ENCODE measurements at regions of chr1 and their contacts with region 1.

Region 1: DNA sequence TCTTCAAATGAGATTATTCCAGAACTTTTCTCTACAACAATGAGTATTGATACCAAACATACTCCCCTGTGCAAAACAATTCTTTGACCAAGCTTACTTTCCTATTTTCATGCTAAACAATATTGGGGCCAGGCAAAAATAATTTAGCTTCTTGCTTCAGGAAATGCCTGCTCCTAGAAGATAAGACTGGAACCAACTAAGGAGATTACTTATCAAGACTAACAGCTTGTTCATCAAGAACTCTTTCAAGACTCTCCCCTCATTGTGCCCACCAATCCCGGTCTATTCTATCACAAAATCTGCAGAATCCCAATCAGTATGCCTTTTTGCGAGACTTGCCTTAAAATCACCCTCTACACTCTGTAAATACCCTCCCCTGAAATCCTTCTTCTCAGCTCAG is 536.6 kb downstream of the RWDD3 start:
- DNase-seq: no peak
- ATAC-seq: no peak
- H3K4me3 ChIP-seq: no peak overlapping the region
- H3K4me3 Mint-ChIP-seq: no peak overlapping the region
- H3K27ac ChIP-seq: no peak overlapping the region
- H3K27ac Mint-ChIP-seq: no peak overlapping the region
- H3K4me1 ChIP-seq: no peaks in the 10 kb centered on the region
- H3K4me1 Mint-ChIP-seq: no peaks in the 10 kb centered on the region
- H3K27me3 ChIP-seq: no peaks in the 10 kb centered on the region
- H3K27me3 Mint-ChIP-seq: no peaks in the 10 kb centered on the region
- CTCF ChIP-seq: no peak

Region 2: GRCh38 chr1:95257758-95258157 is 512.8 kb before region 1 on chr1:
- CTCF ChIA-PET with region 1: no interaction called
- POLR2A ChIA-PET with region 1: no interaction called
- intact Hi-C with region 1: no loop called
- DNase-seq: no peak
- ATAC-seq: no peak
- H3K4me3 ChIP-seq: no peak overlapping the region
- H3K4me3 Mint-ChIP-seq: no peak overlapping the region
- H3K27ac ChIP-seq: no peak overlapping the region
- H3K27ac Mint-ChIP-seq: no peak overlapping the region
- H3K4me1 ChIP-seq: no peaks in the 10 kb centered on the region
- H3K4me1 Mint-ChIP-seq: no peaks in the 10 kb centered on the region
- H3K27me3 ChIP-seq: no peaks in the 10 kb centered on the region
- H3K27me3 Mint-ChIP-seq: no peaks in the 10 kb centered on the region
- CTCF ChIP-seq: no peak

Region 3: GRCh38 chr1:95793893-95794292 is 23.3 kb after region 1 on chr1:
- CTCF ChIA-PET with region 1: no interaction called
- POLR2A ChIA-PET with region 1: no interaction called
- intact Hi-C with region 1: loop called in 1 of 2 experiments (anchors 1 kb)
- DNase-seq: no peak
- ATAC-seq: no peak
- H3K4me3 ChIP-seq: no peak overlapping the region
- H3K4me3 Mint-ChIP-seq: no peak overlapping the region
- H3K27ac ChIP-seq: no peak overlapping the region
- H3K27ac Mint-ChIP-seq: no peak overlapping the region
- H3K4me1 ChIP-seq: no peaks in the 10 kb centered on the region
- H3K4me1 Mint-ChIP-seq: no peaks in the 10 kb centered on the region
- H3K27me3 ChIP-seq: no peaks in the 10 kb centered on the region
- H3K27me3 Mint-ChIP-seq: no peaks in the 10 kb centered on the region
- CTCF ChIP-seq: no peak